ENCODE measurements at regions of chr22 and their contacts with region 1.

Region 1: GRCh38 chr22:44988671-44989070 is 21.1 kb downstream of the PHF21B start:
- DNase-seq: no peak
- ATAC-seq: no peak
- H3K4me3 ChIP-seq: no peak overlapping the region
- H3K27ac ChIP-seq: no peak overlapping the region
- H3K4me1 ChIP-seq: no peaks in the 10 kb centered on the region
- H3K27me3 ChIP-seq: no peaks in the 10 kb centered on the region
- CTCF ChIP-seq: no peak
- POLR2A ChIP-seq: no peak

Region 2: GRCh38 chr22:44753544-44754194 is 235.0 kb before region 1 on chr22:
- intact Hi-C with region 1: no loop called
- DNase-seq: peak; percentile 31 to 61 (median 45)
- ATAC-seq: no peak
- H3K4me3 ChIP-seq: no peak overlapping the region
- H3K27ac ChIP-seq: peak overlapping the region; percentile 37 to 85 (median 78)
- H3K4me1 ChIP-seq: peaks cover 43% of the 10 kb centered on the region
- H3K27me3 ChIP-seq: no peaks in the 10 kb centered on the region
- CTCF ChIP-seq: no peak
- POLR2A ChIP-seq: peak in 1 of 3 donors; percentile 7

Region 3: DNA sequence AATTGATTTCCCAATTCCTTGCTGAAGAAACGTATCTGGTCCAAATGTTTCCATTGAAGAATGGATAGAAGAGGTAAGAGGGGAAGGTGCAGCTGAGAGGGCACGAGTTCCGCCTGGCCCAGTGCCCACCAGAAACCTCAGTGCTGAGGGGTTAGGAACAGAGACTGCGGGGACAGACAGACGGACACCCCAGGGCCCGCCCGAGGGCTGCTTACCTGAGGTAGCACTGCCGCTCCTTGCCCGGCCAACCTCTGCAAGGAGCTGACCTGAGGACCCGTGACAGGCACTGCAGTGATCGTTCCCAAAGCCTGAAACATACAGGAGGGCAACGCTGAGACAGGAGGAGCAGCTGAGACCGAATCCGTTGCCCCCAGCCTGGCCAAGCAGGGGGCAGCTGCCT is 68.5 kb before region 1 on chr22:
- intact Hi-C with region 1: loop called (anchors 10 kb)
- DNase-seq: no peak
- ATAC-seq: no peak
- H3K4me3 ChIP-seq: no peak overlapping the region
- H3K27ac ChIP-seq: no peak overlapping the region
- H3K4me1 ChIP-seq: no peaks in the 10 kb centered on the region
- H3K27me3 ChIP-seq: no peaks in the 10 kb centered on the region
- CTCF ChIP-seq: no peak
- POLR2A ChIP-seq: no peak

Measured in body of pancreas (tissue), 4 donors.